IMR-90 (cell line): ENCODE measurements at regions of chr10 and their contacts with region 1.

Region 1: DNA sequence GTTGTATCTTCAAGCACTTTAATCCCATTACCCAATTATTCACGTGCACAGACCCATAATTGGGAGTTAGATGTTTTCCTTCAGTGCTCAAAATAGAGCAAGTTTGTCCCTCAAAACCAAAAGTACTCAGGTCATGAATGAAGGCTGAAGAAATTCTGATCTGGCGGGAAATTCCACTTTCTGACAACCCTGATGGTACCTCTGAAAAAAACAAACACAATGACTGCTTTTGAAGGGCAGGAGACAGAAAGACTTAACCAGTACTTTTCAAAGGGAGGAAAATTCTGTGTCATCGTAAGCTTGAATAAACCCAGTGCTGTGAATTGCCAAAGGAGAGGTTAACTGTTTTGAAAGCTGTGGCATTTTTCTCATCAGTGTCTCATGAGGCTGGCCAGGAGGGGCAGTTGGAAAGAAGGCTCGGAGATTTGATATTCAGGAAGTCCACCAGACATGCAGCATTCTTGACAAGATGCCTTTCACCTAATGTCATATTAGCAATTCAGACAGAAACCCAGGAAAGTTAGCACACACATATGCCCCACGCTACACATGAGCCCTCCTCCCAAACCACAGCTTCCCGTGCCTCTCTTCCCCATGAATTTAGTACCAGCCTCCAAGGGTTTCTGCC is 347.0 kb downstream of the KCNMA1 start:
- DNase-seq: peak; percentile 93
- ATAC-seq: peak; percentile 81
- H3K4me3 ChIP-seq: no peak overlapping the region
- H3K27ac ChIP-seq: peak overlapping the region; percentile 47; the same call in 1 of the 2 replicates
- H3K4me1 ChIP-seq: peaks cover 17% of the 10 kb centered on the region
- H3K27me3 ChIP-seq: no peaks in the 10 kb centered on the region
- CTCF ChIP-seq: 0 out of 2 replicates have a peak, but pooled peaks have one; percentile 5
- POLR2A ChIP-seq: no peak; the same call in 1 of the 2 replicates
- RAD21 ChIP-seq: peak; percentile 32

Region 2: DNA sequence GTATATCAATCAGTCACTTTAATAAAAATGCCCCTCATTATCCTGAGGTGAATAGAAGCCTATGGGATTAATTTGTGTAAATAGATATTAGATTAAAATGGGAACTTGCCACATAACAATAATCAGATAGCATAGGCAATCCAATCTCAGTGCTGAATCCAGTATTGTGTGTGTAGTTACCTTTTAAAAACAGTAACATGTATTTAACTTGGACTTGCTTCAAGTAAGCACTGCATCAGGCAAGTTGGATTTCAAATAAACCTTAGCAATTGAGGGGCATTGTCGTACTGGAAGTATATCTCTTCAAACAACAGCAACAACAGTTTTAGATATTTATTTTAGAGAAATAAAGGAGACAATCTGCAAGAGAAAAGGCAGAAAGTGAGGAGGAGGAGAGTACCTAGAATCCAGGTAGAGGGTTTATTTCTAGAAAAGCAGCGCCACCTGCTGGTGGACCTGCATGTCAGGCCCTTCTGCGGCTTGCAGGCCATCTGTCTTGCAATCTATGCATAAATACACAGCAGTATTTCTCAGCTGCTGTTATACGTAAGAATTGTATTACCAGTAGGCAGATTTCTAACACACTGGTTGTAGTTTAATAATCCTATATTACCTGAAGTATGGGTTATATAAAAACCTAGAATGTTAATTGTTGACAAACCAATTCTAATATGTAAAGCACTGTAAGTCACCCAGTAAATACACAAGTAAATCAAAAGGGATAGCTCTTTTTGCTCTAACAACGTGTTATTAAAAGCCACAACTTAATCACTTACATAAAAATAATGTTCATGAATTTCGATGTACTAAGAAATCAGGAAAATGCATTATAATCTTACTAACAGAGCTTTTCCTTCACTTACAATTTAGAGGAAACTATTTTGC is 305.8 kb before region 1 on chr10:
- CTCF ChIA-PET with region 1: no interaction called
- POLR2A ChIA-PET with region 1: no interaction called
- dilution Hi-C with region 1: no loop called
- in situ Hi-C with region 1: no loop called
- intact Hi-C with region 1: no loop called
- DNase-seq: peak; percentile 79
- ATAC-seq: peak; percentile 85
- H3K4me3 ChIP-seq: no peak overlapping the region
- H3K27ac ChIP-seq: no peak overlapping the region
- H3K4me1 ChIP-seq: no peaks in the 10 kb centered on the region; the same call in 1 of the 2 replicates
- H3K27me3 ChIP-seq: peaks cover 3% of the 10 kb centered on the region; the same call in 1 of the 2 replicates
- CTCF ChIP-seq: peak; percentile 81
- POLR2A ChIP-seq: no peak
- RAD21 ChIP-seq: peak; percentile 72

Region 3: DNA sequence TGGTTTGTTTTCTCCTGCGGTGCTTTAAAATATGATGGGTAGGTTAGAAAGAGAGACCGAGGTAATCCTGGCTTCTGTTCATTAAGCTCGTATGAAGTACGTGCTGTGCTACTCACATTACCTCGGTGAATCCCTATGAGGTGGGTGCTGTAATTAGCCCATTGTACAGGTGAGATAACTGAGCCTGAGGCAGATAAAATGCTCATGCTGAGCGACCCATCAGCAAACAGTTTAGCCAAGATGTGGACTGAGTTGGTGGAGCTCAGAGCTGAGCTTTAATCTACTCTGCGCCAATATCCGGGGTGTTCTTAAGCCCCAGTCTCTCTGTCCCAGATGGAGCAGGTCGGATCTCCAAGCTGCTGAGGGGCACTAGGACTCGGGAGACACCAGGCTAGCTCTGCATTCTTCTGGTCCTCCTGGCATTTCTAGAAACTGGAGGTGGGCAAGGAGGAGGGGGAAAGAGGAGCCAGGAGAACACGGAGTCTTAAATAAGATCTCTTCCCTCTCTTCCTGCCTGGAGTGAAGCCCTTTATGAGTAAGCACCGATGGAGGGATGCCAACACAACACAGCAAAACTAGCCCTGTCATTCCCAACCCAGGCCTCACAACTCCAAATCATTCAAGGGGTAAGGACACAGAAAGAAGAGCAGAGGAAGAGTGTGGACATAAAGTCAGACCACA is 111.5 kb before region 1 on chr10:
- CTCF ChIA-PET with region 1: no interaction called
- POLR2A ChIA-PET with region 1: no interaction called
- dilution Hi-C with region 1: no loop called
- in situ Hi-C with region 1: no loop called
- intact Hi-C with region 1: no loop called
- DNase-seq: peak; percentile 94
- ATAC-seq: peak; percentile 88
- H3K4me3 ChIP-seq: no peak overlapping the region
- H3K27ac ChIP-seq: no peak overlapping the region
- H3K4me1 ChIP-seq: peaks cover 8% of the 10 kb centered on the region
- H3K27me3 ChIP-seq: no peaks in the 10 kb centered on the region
- CTCF ChIP-seq: no peak
- POLR2A ChIP-seq: no peak
- RAD21 ChIP-seq: peak; percentile 8; the same call in 1 of the 2 replicates

Region 4: GRCh38 chr10:77195101-77195500 is 95.5 kb before region 1 on chr10:
- CTCF ChIA-PET with region 1: no interaction called
- POLR2A ChIA-PET with region 1: no interaction called
- dilution Hi-C with region 1: no loop called
- in situ Hi-C with region 1: no loop called
- intact Hi-C with region 1: loop called (anchors 5 kb)
- DNase-seq: peak; percentile 90
- ATAC-seq: peak; percentile 93
- H3K4me3 ChIP-seq: no peak overlapping the region
- H3K27ac ChIP-seq: no peak overlapping the region
- H3K4me1 ChIP-seq: peaks cover 8% of the 10 kb centered on the region
- H3K27me3 ChIP-seq: no peaks in the 10 kb centered on the region
- CTCF ChIP-seq: no peak
- POLR2A ChIP-seq: no peak
- RAD21 ChIP-seq: no peak

Region 5: GRCh38 chr10:77338143-77338542 is 47.5 kb after region 1 on chr10:
- CTCF ChIA-PET with region 1: no interaction called
- POLR2A ChIA-PET with region 1: no interaction called
- dilution Hi-C with region 1: no loop called
- in situ Hi-C with region 1: no loop called
- intact Hi-C with region 1: no loop called
- DNase-seq: no peak
- ATAC-seq: no peak
- H3K4me3 ChIP-seq: no peak overlapping the region
- H3K27ac ChIP-seq: no peak overlapping the region
- H3K4me1 ChIP-seq: peaks cover 4% of the 10 kb centered on the region; the same call in 1 of the 2 replicates
- H3K27me3 ChIP-seq: peaks cover 2% of the 10 kb centered on the region; the same call in 1 of the 2 replicates
- CTCF ChIP-seq: no peak
- POLR2A ChIP-seq: no peak
- RAD21 ChIP-seq: no peak